Activated B cell treated with CpG ODN at 0.5 μM for 24 hours (primary cell): ENCODE measurements at regions of chr16 and their contacts with region 1.

Region 1: DNA sequence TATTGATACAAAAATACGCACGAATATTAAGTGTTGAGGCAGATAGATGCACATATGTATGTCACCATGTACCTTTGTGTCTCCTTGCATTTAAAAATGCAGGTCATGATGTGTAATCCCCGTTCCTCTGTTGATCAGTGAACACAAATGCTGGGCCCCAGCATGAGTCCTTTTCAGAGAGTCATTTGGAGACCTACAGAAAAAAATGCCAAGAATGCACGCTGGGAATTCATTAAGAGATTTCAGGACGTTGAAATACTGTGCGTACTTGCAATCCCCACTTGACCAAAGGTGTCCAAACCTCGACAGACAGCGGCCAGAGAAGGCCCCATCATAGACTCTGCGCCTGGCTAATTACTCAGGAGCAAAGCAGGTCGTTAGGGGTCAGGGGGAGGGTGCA is 496.0 kb downstream of the MAF start:
- DNase-seq: no peak
- ATAC-seq: no peak
- H3K4me3 Mint-ChIP-seq: no peak overlapping the region
- H3K27ac Mint-ChIP-seq: no peak overlapping the region
- H3K4me1 Mint-ChIP-seq: peaks cover 2% of the 10 kb centered on the region
- H3K27me3 Mint-ChIP-seq: peaks cover 7% of the 10 kb centered on the region
- CTCF ChIP-seq: no peak

Region 2: GRCh38 chr16:78740269-78740668 is 364.3 kb before region 1 on chr16:
- CTCF ChIA-PET with region 1: no interaction called
- POLR2A ChIA-PET with region 1: no interaction called
- intact Hi-C with region 1: no loop called
- DNase-seq: no peak
- ATAC-seq: no peak
- H3K4me3 Mint-ChIP-seq: no peak overlapping the region
- H3K27ac Mint-ChIP-seq: no peak overlapping the region
- H3K4me1 Mint-ChIP-seq: peaks cover 38% of the 10 kb centered on the region
- H3K27me3 Mint-ChIP-seq: no peaks in the 10 kb centered on the region
- CTCF ChIP-seq: no peak

Region 3: GRCh38 chr16:79089735-79090284 is 14.8 kb before region 1 on chr16:
- CTCF ChIA-PET with region 1: no interaction called
- POLR2A ChIA-PET with region 1: no interaction called
- intact Hi-C with region 1: loop called (anchors 2 kb)
- DNase-seq: no peak
- ATAC-seq: peak; percentile 49
- H3K4me3 Mint-ChIP-seq: peak overlapping the region; percentile 64
- H3K27ac Mint-ChIP-seq: peak overlapping the region; percentile 24
- H3K4me1 Mint-ChIP-seq: peaks cover 44% of the 10 kb centered on the region
- H3K27me3 Mint-ChIP-seq: peaks cover 4% of the 10 kb centered on the region
- CTCF ChIP-seq: no peak